Activated naive CD4-positive, alpha-beta T cell treated with anti-CD3 and anti-CD28 coated beads, Interleukin-2, amount 10 ng/mL, durations not matched to agents 7 days and 5 days (primary cell): ENCODE measurements at regions of chr2 and their contacts with region 1.

Region 1: GRCh38 chr2:109128048-109128465 is 948 bp upstream of the SH3RF3 start:
- DNase-seq: peak; percentile 72
- H3K4me3 Mint-ChIP-seq: peak overlapping the region; percentile 72
- H3K27ac Mint-ChIP-seq: no peak overlapping the region
- H3K4me1 Mint-ChIP-seq: peaks cover 23% of the 10 kb centered on the region
- H3K27me3 Mint-ChIP-seq: peaks cover 57% of the 10 kb centered on the region

Region 2: GRCh38 chr2:109209412-109209811 is 81.4 kb after region 1 on chr2:
- CTCF ChIA-PET with region 1: interaction called, 17 read pairs
- DNase-seq: no peak
- H3K4me3 Mint-ChIP-seq: no peak overlapping the region
- H3K27ac Mint-ChIP-seq: no peak overlapping the region
- H3K4me1 Mint-ChIP-seq: peaks cover 27% of the 10 kb centered on the region
- H3K27me3 Mint-ChIP-seq: peaks cover 87% of the 10 kb centered on the region

Region 3: GRCh38 chr2:109348671-109349550 is 220.9 kb after region 1 on chr2:
- CTCF ChIA-PET with region 1: interaction called, 10 read pairs
- DNase-seq: peak; percentile 79
- H3K4me3 Mint-ChIP-seq: peak overlapping the region; percentile 21
- H3K27ac Mint-ChIP-seq: peak overlapping the region; percentile 86
- H3K4me1 Mint-ChIP-seq: peaks cover 43% of the 10 kb centered on the region
- H3K27me3 Mint-ChIP-seq: peaks cover 24% of the 10 kb centered on the region

Region 4: GRCh38 chr2:109510136-109511028 is 382.3 kb after region 1 on chr2:
- CTCF ChIA-PET with region 1: interaction called, 68 read pairs
- DNase-seq: peak; percentile 86
- H3K4me3 Mint-ChIP-seq: no peak overlapping the region
- H3K27ac Mint-ChIP-seq: no peak overlapping the region
- H3K4me1 Mint-ChIP-seq: no peaks in the 10 kb centered on the region
- H3K27me3 Mint-ChIP-seq: peaks cover 14% of the 10 kb centered on the region